ENCODE measurements at regions of chr3 and their contacts with region 1.

Region 1: DNA sequence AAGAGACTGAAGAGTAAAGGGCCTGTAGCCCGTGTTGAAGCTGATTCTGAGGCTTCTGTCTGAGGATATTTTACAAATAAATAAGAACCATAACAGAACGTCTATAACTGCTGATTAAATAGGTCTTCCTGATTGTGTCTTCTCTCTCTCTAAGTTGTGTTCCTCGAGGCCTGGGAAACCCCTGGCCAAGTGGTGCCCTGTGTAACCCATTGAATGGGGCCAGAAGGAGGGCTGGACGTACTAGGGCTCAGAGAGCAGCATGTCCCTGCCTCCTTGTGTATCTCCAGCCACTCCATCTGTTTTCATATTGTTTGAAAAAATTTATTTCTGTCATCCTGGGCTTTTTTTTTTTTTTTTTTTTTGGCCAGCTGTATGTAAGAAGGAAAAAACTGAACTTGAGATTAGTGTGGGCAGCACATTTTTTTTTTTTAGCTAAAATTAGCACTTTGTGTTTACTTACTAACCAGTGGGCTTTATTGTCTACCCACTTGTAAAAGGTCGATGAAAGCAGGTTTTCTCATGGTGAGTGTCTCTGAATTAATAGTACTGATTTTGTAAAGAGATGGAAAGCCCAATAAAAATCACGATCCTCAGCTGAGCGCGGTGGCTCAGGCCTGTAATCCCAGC is 10.7 kb downstream of the DHX30 start:
- DNase-seq: no peak
- ATAC-seq: no peak
- H3K4me3 ChIP-seq: no peak overlapping the region
- H3K27ac ChIP-seq: no peak overlapping the region
- H3K4me1 ChIP-seq: no peaks in the 10 kb centered on the region
- H3K27me3 ChIP-seq: no peaks in the 10 kb centered on the region
- CTCF ChIP-seq: no peak

Region 2: DNA sequence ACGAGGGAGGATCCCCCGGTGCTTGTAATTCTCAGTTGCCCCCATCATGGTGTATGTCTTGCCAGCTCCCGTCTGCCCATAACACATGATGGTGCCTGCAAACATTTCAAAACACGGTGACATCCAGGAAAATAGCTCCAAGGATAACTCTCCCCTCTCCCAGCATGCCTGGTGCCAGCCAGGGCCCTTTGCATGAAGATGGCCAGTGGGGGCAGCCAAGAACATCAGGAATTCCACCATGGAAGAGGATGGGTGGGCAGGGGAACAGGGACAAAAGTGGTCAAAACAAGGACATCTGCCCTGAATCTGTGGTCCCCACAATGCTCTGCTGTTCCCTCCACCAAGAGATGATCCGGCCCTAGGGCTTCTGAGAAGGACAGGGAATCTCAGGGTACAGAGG is 540.1 kb before region 1 on chr3:
- CTCF ChIA-PET with region 1: no interaction called
- POLR2A ChIA-PET with region 1: interaction called, 10 read pairs
- intact Hi-C with region 1: no loop called
- DNase-seq: no peak
- ATAC-seq: no peak
- H3K4me3 ChIP-seq: no peak overlapping the region
- H3K27ac ChIP-seq: no peak overlapping the region
- H3K4me1 ChIP-seq: no peaks in the 10 kb centered on the region
- H3K27me3 ChIP-seq: no peaks in the 10 kb centered on the region
- CTCF ChIP-seq: no peak; the same call in 1 of the 2 replicates

Region 3: DNA sequence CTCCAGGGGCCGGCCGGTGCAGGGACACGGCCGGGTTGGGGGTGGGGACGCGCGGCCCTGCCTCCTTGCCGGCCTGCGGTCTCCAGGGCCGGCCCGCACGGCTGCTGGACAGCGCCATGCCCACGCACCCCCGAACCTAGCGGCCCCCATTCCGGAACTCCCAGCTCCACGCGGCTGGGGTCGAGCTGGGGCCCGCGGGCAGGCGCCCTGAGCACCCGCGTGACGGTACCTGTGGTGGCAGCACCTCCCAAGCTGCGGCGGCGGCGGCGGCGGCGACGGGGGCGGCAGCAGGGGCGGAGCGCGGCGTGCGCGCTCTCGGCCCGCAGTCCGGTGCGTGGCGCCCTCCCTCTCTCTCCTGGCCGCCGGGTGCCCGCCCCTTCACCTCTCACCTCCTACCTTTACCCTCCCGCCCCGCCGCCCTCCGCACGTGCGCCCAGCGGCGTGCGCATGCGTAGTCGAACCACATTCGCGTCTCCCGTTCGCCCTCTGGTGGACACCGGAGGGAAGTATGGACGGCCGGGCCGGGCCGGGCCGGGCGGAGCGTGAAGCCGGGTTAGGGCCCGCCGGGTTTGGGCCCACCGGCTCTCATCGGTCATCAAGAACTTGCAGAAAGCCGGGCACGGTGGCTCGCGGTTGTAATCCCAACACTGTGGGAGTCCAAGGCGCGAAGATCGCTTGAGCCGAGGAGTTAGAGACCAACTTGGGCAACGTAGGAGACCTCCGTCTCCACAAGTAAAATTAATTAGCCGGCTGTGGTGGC is 337.9 kb before region 1 on chr3 and contains the start of gene SCAP:
- CTCF ChIA-PET with region 1: no interaction called
- POLR2A ChIA-PET with region 1: interaction called, 20 read pairs
- intact Hi-C with region 1: no loop called
- DNase-seq: peak; percentile 91
- ATAC-seq: peak; percentile 83
- H3K4me3 ChIP-seq: peak within 1 kb of the TSS; percentile 88
- H3K27ac ChIP-seq: peak within 1 kb of the TSS; percentile 46
- H3K4me1 ChIP-seq: peaks cover 8% of the 10 kb centered on the region
- H3K27me3 ChIP-seq: no peaks in the 10 kb centered on the region
- CTCF ChIP-seq: peak; percentile 82
- total RNA-seq, gene SCAP: 84.7 and 95.6 TPM in 2 replicates

Region 4: DNA sequence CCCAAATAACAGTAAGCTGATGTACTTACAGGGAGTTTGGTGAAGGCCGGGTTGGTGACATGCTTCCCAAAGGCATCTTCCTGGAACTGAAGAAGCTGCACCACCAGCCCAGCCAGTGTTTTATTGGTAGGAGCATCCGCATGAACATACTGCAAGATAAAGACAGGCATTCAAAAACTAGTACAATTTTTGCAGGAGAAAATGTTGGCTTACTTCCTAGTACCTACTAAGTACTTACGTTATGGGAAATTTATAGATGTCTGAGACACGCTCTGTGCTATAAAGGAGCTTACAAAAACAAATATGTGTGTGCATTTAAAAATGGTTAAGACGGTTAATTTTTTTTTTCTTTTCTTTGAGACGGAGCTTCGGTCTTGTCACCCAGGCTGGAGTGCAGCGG is 40.9 kb before region 1 on chr3:
- CTCF ChIA-PET with region 1: no interaction called
- POLR2A ChIA-PET with region 1: interaction called, 12 read pairs
- intact Hi-C with region 1: no loop called
- DNase-seq: no peak
- ATAC-seq: no peak
- H3K4me3 ChIP-seq: no peak overlapping the region
- H3K27ac ChIP-seq: no peak overlapping the region
- H3K4me1 ChIP-seq: no peaks in the 10 kb centered on the region
- H3K27me3 ChIP-seq: no peaks in the 10 kb centered on the region
- CTCF ChIP-seq: no peak

Region 5: GRCh38 chr3:47802734-47803477 is 10.8 kb before region 1 on chr3 and contains the start of gene DHX30:
- CTCF ChIA-PET with region 1: no interaction called
- POLR2A ChIA-PET with region 1: interaction called, 18 read pairs
- intact Hi-C with region 1: no loop called
- DNase-seq: peak; percentile 83
- ATAC-seq: peak; percentile 90
- H3K4me3 ChIP-seq: peak within 1 kb of the TSS; percentile 96
- H3K27ac ChIP-seq: peak within 1 kb of the TSS; percentile 84
- H3K4me1 ChIP-seq: peaks cover 17% of the 10 kb centered on the region; the same call in 1 of the 2 replicates
- H3K27me3 ChIP-seq: no peaks in the 10 kb centered on the region
- CTCF ChIP-seq: no peak
- total RNA-seq, gene DHX30: 152 and 153 TPM in 2 replicates